Naive thymus-derived CD4-positive, alpha-beta T cell (primary cell): ENCODE measurements at regions of chr7 and their contacts with region 1.

Region 1: GRCh38 chr7:19144661-19145433 is at the start of gene FERD3L:
- DNase-seq: no peak
- ATAC-seq: no peak
- H3K4me3 ChIP-seq: no peak within 1 kb of the TSS
- H3K4me3 Mint-ChIP-seq: no peak within 1 kb of the TSS
- H3K27ac ChIP-seq: no peak within 1 kb of the TSS
- H3K27ac Mint-ChIP-seq: no peak within 1 kb of the TSS
- H3K4me1 ChIP-seq: no peaks in the 10 kb centered on the region
- H3K4me1 Mint-ChIP-seq: no peaks in the 10 kb centered on the region
- H3K27me3 ChIP-seq: no peaks in the 10 kb centered on the region
- H3K27me3 Mint-ChIP-seq: peaks cover 39 to 57% (median 51%) of the 10 kb centered on the region in 5 donors
- total RNA-seq, gene FERD3L: not detected

Region 2: DNA sequence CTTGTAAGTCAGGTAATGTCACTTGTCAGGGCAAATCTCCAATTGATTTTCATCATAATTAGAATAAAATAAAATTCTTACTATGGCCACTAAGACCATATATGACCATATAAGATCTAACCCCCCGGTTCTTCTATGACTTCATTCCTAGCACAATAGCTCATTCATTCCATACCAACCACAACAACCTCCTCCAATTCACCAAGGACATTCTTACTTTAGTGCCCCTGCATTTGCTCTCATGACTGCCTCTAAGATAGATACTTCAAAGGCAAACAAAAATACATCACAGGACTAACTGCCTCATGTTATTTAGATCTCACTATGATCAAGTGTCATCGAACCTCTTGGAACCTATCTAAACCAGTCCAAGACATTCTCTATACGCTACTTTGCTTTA is 1295.3 kb before region 1 on chr7:
- CTCF ChIA-PET with region 1: no interaction called
- POLR2A ChIA-PET with region 1: no interaction called
- intact Hi-C with region 1: no loop called
- DNase-seq: no peak
- ATAC-seq: no peak
- H3K4me3 ChIP-seq: no peak overlapping the region
- H3K4me3 Mint-ChIP-seq: no peak overlapping the region
- H3K27ac ChIP-seq: no peak overlapping the region
- H3K27ac Mint-ChIP-seq: peak overlapping the region in 1 of 9 donors; percentile 9
- H3K4me1 ChIP-seq: no peaks in the 10 kb centered on the region
- H3K4me1 Mint-ChIP-seq: peaks cover 9 to 30% (median 22%) of the 10 kb centered on the region in 7 donors
- H3K27me3 ChIP-seq: no peaks in the 10 kb centered on the region
- H3K27me3 Mint-ChIP-seq: no peaks in the 10 kb centered on the region

Region 3: GRCh38 chr7:19107356-19108146 is 37.3 kb before region 1 on chr7:
- CTCF ChIA-PET with region 1: no interaction called
- POLR2A ChIA-PET with region 1: no interaction called
- intact Hi-C with region 1: loop called in 1 of 2 experiments (anchors 2 kb)
- DNase-seq: no peak
- ATAC-seq: no peak
- H3K4me3 ChIP-seq: no peak overlapping the region
- H3K4me3 Mint-ChIP-seq: peak overlapping the region in 1 of 10 donors; percentile 47
- H3K27ac ChIP-seq: no peak overlapping the region
- H3K27ac Mint-ChIP-seq: peak overlapping the region in 1 of 9 donors; percentile 60
- H3K4me1 ChIP-seq: no peaks in the 10 kb centered on the region
- H3K4me1 Mint-ChIP-seq: peaks cover 0 to 10% (median 0%) of the 10 kb centered on the region in 7 donors
- H3K27me3 ChIP-seq: peaks cover 4 to 14% of the 10 kb centered on the region in 2 donors
- H3K27me3 Mint-ChIP-seq: peaks cover 84 to 95% (median 92%) of the 10 kb centered on the region in 5 donors